ENCODE measurements at regions of chr11 and their contacts with region 1.

Region 1: DNA sequence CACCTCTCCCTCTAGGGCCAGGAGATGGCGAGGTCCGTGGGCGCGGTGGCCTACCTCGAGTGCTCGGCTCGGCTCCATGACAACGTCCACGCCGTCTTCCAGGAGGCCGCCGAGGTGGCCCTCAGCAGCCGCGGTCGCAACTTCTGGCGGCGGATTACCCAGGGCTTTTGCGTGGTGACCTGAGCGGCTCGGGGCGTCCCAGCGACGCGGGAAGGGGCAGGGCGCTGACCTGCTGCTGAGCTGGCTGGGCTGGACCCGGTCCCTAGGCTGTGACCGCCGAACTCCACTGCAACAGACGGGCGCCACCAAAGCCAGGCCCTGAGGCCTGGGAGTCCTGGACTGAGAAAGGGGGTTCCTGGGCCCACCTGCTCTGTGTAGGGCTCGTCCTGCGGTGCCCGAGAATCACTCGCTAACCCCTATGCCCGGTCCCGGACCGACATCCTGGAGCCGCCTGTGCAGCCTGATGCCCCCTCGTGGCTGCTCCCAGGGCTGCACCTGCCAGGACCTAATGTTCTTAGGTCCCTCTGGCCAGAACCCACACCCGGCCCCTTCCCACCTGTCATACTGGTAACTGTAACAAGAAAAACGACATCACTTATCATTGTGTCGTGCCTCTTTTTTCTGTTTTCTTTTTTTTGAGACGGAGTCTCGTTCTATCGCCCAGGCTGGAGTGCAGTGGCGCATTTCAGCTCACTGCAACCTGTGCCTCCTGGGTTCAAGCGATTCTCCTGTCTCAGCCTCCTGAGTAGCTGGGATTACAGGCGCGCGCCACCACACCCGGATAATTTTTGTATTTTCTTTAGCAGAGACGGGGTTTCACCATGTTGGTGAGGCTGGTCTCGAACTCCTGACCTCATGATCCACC is 15.0 kb downstream of the RHOD start:
- DNase-seq: peak; percentile 69
- H3K4me3 ChIP-seq: peak overlapping the region in 1 of 3 experiments; percentile 33
- H3K27ac ChIP-seq: no peak overlapping the region
- H3K4me1 ChIP-seq: peaks cover 3% of the 10 kb centered on the region
- H3K27me3 ChIP-seq: no peaks in the 10 kb centered on the region
- CTCF ChIP-seq: peak; percentile 91 to 95
- POLR2A ChIP-seq: no peak

Region 2: GRCh38 chr11:66119348-66120133 is 952.1 kb before region 1 on chr11:
- CTCF ChIA-PET with region 1: no interaction called
- POLR2A ChIA-PET with region 1: no interaction called
- dilution Hi-C with region 1: no loop called
- intact Hi-C with region 1: no loop called
- DNase-seq: peak; percentile 71
- H3K4me3 ChIP-seq: no peak overlapping the region
- H3K27ac ChIP-seq: peak overlapping the region; percentile 78
- H3K4me1 ChIP-seq: peaks cover 40% of the 10 kb centered on the region
- H3K27me3 ChIP-seq: no peaks in the 10 kb centered on the region
- CTCF ChIP-seq: no peak
- POLR2A ChIP-seq: no peak

Region 3: GRCh38 chr11:67053896-67054842 is 17.5 kb before region 1 on chr11:
- CTCF ChIA-PET with region 1: interaction called, 129 read pairs
- POLR2A ChIA-PET with region 1: no interaction called
- dilution Hi-C with region 1: no loop called
- intact Hi-C with region 1: loop called (anchors 1 kb)
- DNase-seq: peak; percentile 57
- H3K4me3 ChIP-seq: no peak overlapping the region
- H3K27ac ChIP-seq: no peak overlapping the region
- H3K4me1 ChIP-seq: peaks cover 23% of the 10 kb centered on the region
- H3K27me3 ChIP-seq: peaks cover 0 to 3% of the 10 kb centered on the region in 2 experiments
- CTCF ChIP-seq: peak; percentile 77 to 83
- POLR2A ChIP-seq: no peak

Region 4: DNA sequence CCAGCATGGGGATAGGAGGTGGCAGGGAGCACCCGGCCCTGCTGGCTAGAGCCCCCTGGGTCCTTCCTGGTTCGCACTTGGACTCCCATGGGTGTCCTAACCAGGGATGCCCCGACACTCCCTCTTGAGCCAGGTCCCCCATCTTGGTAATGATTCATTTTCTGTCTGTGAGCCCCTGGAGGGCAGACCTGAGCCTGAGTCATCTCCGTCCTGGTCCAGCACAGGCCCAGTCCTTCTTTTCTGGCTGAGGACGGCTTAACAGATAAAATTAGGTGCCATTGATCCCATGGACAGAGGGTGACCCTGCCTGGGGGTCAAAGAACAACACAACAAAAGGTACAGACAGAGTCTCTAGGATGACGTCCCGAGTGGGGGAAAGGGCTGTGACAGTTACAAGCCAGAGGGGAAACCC is 11.5 kb before region 1 on chr11:
- CTCF ChIA-PET with region 1: interaction called, 129 read pairs
- POLR2A ChIA-PET with region 1: no interaction called
- dilution Hi-C with region 1: no loop called
- intact Hi-C with region 1: no loop called
- DNase-seq: no peak
- H3K4me3 ChIP-seq: no peak overlapping the region
- H3K27ac ChIP-seq: no peak overlapping the region
- H3K4me1 ChIP-seq: peaks cover 12% of the 10 kb centered on the region
- H3K27me3 ChIP-seq: no peaks in the 10 kb centered on the region
- CTCF ChIP-seq: no peak
- POLR2A ChIP-seq: no peak

Region 5: GRCh38 chr11:67160874-67161783 is 89.5 kb after region 1 on chr11:
- CTCF ChIA-PET with region 1: no interaction called
- POLR2A ChIA-PET with region 1: no interaction called
- dilution Hi-C with region 1: no loop called
- intact Hi-C with region 1: no loop called
- DNase-seq: peak; percentile 20
- H3K4me3 ChIP-seq: no peak overlapping the region
- H3K27ac ChIP-seq: no peak overlapping the region
- H3K4me1 ChIP-seq: peaks cover 7% of the 10 kb centered on the region
- H3K27me3 ChIP-seq: no peaks in the 10 kb centered on the region
- CTCF ChIP-seq: no peak
- POLR2A ChIP-seq: no peak

Measured in endothelial cell of umbilical vein (primary cell).